RWPE1 (cell line): ENCODE measurements at regions of chr10 and their contacts with region 1.

Region 1: DNA sequence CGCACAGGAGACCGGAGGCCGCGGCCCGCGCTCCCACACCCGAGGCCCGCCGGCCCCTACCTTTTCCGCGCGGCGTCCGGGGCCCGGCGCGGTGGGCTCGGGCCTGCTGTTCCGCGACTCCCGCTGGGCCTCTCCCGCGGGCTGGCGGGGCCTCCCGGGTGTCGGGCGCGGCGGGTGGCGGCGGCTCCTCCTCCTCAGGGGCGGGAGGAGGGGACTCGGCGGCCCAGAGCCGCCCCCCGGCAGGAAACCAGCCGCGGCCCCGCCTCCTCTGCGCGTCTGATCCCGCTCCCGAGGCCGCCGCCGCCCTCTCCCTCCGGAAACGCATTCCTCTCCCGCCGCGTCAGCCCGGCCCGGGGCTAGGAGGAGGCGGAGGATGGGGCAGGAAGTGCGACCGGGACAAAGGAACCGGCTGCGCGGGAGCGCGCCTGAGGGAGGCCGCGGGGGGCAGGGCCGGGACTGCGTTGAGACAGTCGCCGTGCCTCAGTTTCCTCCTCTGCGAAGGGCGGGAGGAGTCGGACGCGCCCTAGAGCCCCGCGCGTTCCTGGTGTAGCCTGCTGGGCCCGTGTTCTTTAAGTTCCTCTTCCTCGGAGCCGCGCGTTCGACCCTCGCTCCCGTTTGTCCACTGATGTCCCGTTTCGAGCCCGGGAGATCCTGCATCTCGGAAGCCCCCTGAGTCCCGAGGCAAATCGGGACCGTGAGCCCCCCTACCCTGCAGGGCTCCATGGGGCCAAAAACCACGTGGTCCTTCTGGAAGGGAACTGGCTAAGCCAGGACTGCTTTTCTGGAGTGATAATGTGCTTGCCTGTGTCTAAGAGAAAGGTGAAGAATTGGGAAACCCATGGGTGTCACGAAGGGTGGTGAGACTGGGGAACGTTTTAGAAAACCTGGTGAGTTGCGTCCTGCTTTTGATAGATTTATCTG is at the start of gene ITGB1:
- DNase-seq: peak; percentile 82
- H3K27ac ChIP-seq: peak within 1 kb of the TSS; percentile 93
- CTCF ChIP-seq: no peak

Region 2: GRCh38 chr10:32980558-32981468 is 22.5 kb after region 1 on chr10:
- CTCF ChIA-PET with region 1: interaction called, 5 read pairs
- POLR2A ChIA-PET with region 1: interaction called, 13 read pairs
- DNase-seq: peak; percentile 88
- H3K27ac ChIP-seq: peak overlapping the region; percentile 97
- CTCF ChIP-seq: no peak

Region 3: GRCh38 chr10:32995751-32996150 is 37.4 kb after region 1 on chr10:
- CTCF ChIA-PET with region 1: no interaction called
- POLR2A ChIA-PET with region 1: no interaction called
- DNase-seq: no peak
- H3K27ac ChIP-seq: no peak overlapping the region
- CTCF ChIP-seq: no peak